CD14-positive monocyte (primary cell): ENCODE measurements at regions of chr14 and their contacts with region 1.

Region 1: DNA sequence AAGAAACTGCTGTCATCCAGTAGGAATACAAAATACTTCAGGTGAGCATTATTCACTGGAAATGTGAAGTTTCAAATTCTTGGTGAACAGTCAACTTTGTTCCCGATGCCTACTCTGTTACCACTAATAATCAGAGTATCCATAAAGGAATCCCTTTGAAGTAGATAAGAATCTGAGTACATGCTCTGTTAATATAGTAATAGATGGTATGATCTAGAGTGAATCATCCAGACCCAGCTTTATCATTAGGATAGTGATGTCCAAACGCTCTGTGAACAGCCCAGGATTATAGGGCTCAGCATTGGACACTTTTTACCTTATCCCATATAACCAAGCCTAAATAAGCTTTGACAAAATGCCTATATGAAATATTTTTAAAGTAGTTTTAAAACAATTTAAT is 33.3 kb downstream of the PPP2R3C start:
- DNase-seq: no peak
- H3K4me3 ChIP-seq: no peak overlapping the region
- H3K4me3 Mint-ChIP-seq: no peak overlapping the region
- H3K27ac ChIP-seq: peak overlapping the region in 1 of 2 donors; percentile 32
- H3K27ac Mint-ChIP-seq: peak overlapping the region in 1 of 7 donors; percentile 16
- H3K4me1 ChIP-seq: no peaks in the 10 kb centered on the region
- H3K4me1 Mint-ChIP-seq: no peaks in the 10 kb centered on the region
- H3K27me3 ChIP-seq: no peaks in the 10 kb centered on the region
- H3K27me3 Mint-ChIP-seq: peaks cover 0 to 2% (median 0%) of the 10 kb centered on the region in 3 donors
- CTCF ChIP-seq: no peak

Region 2: DNA sequence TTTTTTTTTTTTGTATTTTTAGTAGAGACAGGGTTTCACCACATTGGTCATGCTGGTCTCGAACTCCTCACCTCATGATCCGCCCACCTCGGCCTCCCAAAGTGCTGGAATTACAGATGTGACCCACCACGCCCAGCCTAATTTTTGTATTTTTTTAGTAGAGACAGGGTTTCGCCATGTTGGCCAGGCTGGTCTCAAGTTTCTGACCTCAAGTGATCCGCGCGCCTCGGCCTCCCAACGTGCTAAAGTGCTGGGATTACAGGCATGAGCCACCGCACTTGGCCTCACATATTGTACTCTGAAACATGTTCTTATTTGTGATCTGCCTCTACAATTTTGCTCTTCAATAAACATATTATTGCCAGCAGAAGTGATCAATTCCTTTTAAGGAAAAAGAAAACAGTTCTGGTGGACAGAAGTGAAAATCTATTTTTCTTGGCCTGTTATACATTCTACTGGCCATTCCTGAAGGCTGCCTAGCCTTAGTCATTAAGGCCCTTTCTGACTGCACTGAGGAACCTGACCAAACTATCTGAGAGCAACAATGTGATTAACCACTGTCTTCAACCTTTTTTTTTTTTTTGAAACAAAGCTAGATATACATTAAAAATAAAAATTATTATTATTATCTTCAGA is 494.7 kb before region 1 on chr14:
- intact Hi-C with region 1: loop called in 1 of 2 experiments (anchors 10 kb)
- DNase-seq: no peak
- H3K4me3 ChIP-seq: no peak overlapping the region
- H3K4me3 Mint-ChIP-seq: no peak overlapping the region
- H3K27ac ChIP-seq: no peak overlapping the region
- H3K27ac Mint-ChIP-seq: peak overlapping the region in 1 of 7 donors; percentile 40
- H3K4me1 ChIP-seq: no peaks in the 10 kb centered on the region
- H3K4me1 Mint-ChIP-seq: no peaks in the 10 kb centered on the region
- H3K27me3 ChIP-seq: no peaks in the 10 kb centered on the region
- H3K27me3 Mint-ChIP-seq: peaks cover 0 to 1% (median 0%) of the 10 kb centered on the region in 3 donors
- CTCF ChIP-seq: no peak

Region 3: GRCh38 chr14:34781242-34781641 is 307.3 kb before region 1 on chr14:
- intact Hi-C with region 1: loop called in 1 of 2 experiments (anchors 10 kb)
- DNase-seq: peak; percentile 2 to 79 (median 10)
- H3K4me3 ChIP-seq: no peak overlapping the region
- H3K4me3 Mint-ChIP-seq: no peak overlapping the region
- H3K27ac ChIP-seq: peak overlapping the region in 1 of 2 donors; percentile 26
- H3K27ac Mint-ChIP-seq: peak overlapping the region in 5 of 7 donors; percentile 4 to 71 (median 8)
- H3K4me1 ChIP-seq: no peaks in the 10 kb centered on the region
- H3K4me1 Mint-ChIP-seq: peaks cover 1% of the 10 kb centered on the region
- H3K27me3 ChIP-seq: no peaks in the 10 kb centered on the region
- H3K27me3 Mint-ChIP-seq: no peaks in the 10 kb centered on the region
- CTCF ChIP-seq: no peak